Activated CD8-positive, alpha-beta T cell treated with anti-CD3 and anti-CD28 coated beads, Interleukin-2, amount 10 ng/mL, durations not matched to agents 7 days and 5 days (primary cell): ENCODE measurements at regions of chr22 and their contacts with region 1.

Region 1: GRCh38 chr22:40055143-40055883 is 60.6 kb downstream of the FAM83F start:
- DNase-seq: peak; percentile 46
- ATAC-seq: peak; percentile 94
- H3K4me3 Mint-ChIP-seq: peak overlapping the region; percentile 55
- H3K27ac Mint-ChIP-seq: peak overlapping the region; percentile 92
- H3K4me1 Mint-ChIP-seq: peaks cover 78% of the 10 kb centered on the region
- H3K27me3 Mint-ChIP-seq: no peaks in the 10 kb centered on the region

Region 2: GRCh38 chr22:39900306-39901227 is 154.7 kb before region 1 on chr22 and contains the start of gene GRAP2:
- CTCF ChIA-PET with region 1: no interaction called
- POLR2A ChIA-PET with region 1: no interaction called
- DNase-seq: peak; percentile 90
- ATAC-seq: peak; percentile 95
- H3K4me3 Mint-ChIP-seq: peak within 1 kb of the TSS; percentile 95
- H3K27ac Mint-ChIP-seq: peak within 1 kb of the TSS; percentile 96
- H3K4me1 Mint-ChIP-seq: peaks cover 17% of the 10 kb centered on the region
- H3K27me3 Mint-ChIP-seq: no peaks in the 10 kb centered on the region
- total RNA-seq, gene GRAP2: 235 to 239 TPM

Region 3: GRCh38 chr22:40065981-40066380 is 10.7 kb after region 1 on chr22:
- CTCF ChIA-PET with region 1: interaction called, 14 read pairs
- POLR2A ChIA-PET with region 1: no interaction called
- DNase-seq: no peak
- ATAC-seq: no peak
- H3K4me3 Mint-ChIP-seq: no peak overlapping the region
- H3K27ac Mint-ChIP-seq: no peak overlapping the region
- H3K4me1 Mint-ChIP-seq: peaks cover 36% of the 10 kb centered on the region
- H3K27me3 Mint-ChIP-seq: no peaks in the 10 kb centered on the region